ENCODE measurements at regions of chr2 and their contacts with region 1.

Region 1: GRCh38 chr2:130342533-130343275 is at the start of gene IMP4:
- DNase-seq: peak; percentile 98 to 99
- H3K4me3 ChIP-seq: peak within 1 kb of the TSS; percentile 70
- H3K4me3 Mint-ChIP-seq: peak within 1 kb of the TSS; percentile 84
- H3K27ac Mint-ChIP-seq: peak within 1 kb of the TSS; percentile 93
- H3K4me1 ChIP-seq: peaks cover 3% of the 10 kb centered on the region
- H3K4me1 Mint-ChIP-seq: peaks cover 13% of the 10 kb centered on the region
- H3K27me3 ChIP-seq: no peaks in the 10 kb centered on the region
- H3K27me3 Mint-ChIP-seq: no peaks in the 10 kb centered on the region
- CTCF ChIP-seq: peak; percentile 37 to 71
- total RNA-seq, gene IMP4: 105 and 120 TPM in 2 replicates

Region 2: DNA sequence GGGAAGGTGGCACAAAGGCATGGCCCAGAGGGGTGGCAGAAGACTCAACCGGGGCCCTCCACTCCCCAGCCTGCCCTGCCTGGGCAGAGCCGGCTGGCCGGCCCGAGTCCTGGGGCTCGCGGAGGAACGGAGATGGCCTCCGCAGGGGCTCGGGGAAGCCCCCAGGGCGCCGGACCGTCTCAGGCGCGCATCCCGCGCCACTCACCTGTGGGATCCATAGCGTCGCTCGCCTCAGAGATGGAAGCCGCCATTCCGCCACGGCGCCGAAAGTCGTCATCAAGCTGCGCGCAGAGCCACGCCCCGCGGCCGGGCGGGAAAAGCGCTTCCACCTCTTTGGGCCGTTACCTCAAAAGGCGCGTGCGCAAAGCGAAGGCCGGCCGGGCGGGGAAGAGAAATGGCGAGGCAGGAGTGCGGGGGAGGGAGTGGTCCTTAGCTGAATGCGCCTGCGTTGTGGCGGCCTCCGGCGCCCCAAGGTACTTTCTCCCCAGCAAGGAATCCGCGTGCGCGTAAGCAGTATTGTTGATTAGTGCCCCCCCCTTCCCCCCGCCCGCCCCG is 161.3 kb before region 1 on chr2 and contains the start of gene SMPD4:
- CTCF ChIA-PET with region 1: interaction called, 12 read pairs
- POLR2A ChIA-PET with region 1: interaction called, 16 read pairs
- intact Hi-C with region 1: no loop called
- DNase-seq: peak; percentile 98
- H3K4me3 ChIP-seq: peak within 1 kb of the TSS; percentile 100
- H3K4me3 Mint-ChIP-seq: peak within 1 kb of the TSS; percentile 96
- H3K27ac Mint-ChIP-seq: peak within 1 kb of the TSS; percentile 94
- H3K4me1 ChIP-seq: peaks cover 8% of the 10 kb centered on the region; the same call in 1 of the 2 replicates
- H3K4me1 Mint-ChIP-seq: peaks cover 8% of the 10 kb centered on the region
- H3K27me3 ChIP-seq: no peaks in the 10 kb centered on the region
- H3K27me3 Mint-ChIP-seq: no peaks in the 10 kb centered on the region
- CTCF ChIP-seq: no peak
- total RNA-seq, gene SMPD4: 140 and 141 TPM in 2 replicates

Region 3: DNA sequence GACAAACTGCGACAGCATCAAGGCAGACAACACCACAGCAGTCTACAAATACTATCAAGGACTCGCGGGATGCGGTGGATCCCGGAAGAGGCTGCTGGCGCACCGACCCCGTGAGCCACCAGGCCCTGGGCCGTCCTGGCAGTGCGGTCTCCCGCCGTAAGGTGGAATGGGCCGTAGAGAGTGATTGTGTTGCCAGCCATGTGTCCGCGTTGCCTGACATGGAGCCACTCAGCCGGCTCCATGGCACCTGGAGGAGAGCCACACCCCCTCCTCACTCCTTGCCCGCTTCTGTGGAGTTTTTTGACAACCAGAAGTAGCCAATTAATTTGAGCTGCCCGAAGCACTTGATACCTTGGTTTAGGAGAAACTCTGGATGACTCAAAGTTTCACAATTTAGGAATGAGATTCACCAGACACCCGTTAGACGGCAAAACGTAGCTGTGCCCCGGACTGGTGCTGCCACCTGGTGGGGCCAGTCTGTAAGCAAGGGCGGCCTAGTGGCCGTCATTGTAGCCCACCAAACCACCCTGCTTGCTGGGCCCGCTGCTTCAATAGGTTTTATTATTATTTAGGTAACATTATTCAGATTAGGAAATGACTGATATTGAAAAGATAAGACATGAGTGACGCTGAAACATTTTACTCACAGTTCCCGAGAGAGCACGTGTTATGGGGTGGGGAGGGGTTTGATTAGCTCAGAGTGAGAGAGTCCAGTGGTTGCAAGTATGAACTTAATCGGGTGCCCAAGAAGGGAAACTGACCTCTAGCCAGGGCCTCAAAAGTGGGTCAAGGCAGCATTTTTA is 10.2 kb before region 1 on chr2:
- CTCF ChIA-PET with region 1: interaction called, 18 read pairs
- POLR2A ChIA-PET with region 1: interaction called, 6 read pairs
- intact Hi-C with region 1: no loop called
- DNase-seq: peak; percentile 73 to 89
- H3K4me3 ChIP-seq: no peak overlapping the region
- H3K4me3 Mint-ChIP-seq: peak overlapping the region; percentile 39
- H3K27ac Mint-ChIP-seq: no peak overlapping the region
- H3K4me1 ChIP-seq: peaks cover 12% of the 10 kb centered on the region
- H3K4me1 Mint-ChIP-seq: no peaks in the 10 kb centered on the region
- H3K27me3 ChIP-seq: no peaks in the 10 kb centered on the region
- H3K27me3 Mint-ChIP-seq: peaks cover 6% of the 10 kb centered on the region
- CTCF ChIP-seq: peak; percentile 94 to 97

Region 4: GRCh38 chr2:130355578-130356431 is 13.1 kb after region 1 on chr2 and contains the start of gene PTPN18:
- CTCF ChIA-PET with region 1: interaction called, 17 read pairs
- POLR2A ChIA-PET with region 1: interaction called, 19 read pairs
- intact Hi-C with region 1: loop called (anchors 1 kb)
- DNase-seq: peak; percentile 90 to 94
- H3K4me3 ChIP-seq: peak within 1 kb of the TSS; percentile 75
- H3K4me3 Mint-ChIP-seq: peak within 1 kb of the TSS; percentile 90
- H3K27ac Mint-ChIP-seq: peak within 1 kb of the TSS; percentile 86
- H3K4me1 ChIP-seq: peaks cover 5% of the 10 kb centered on the region; the same call in 1 of the 2 replicates
- H3K4me1 Mint-ChIP-seq: peaks cover 10% of the 10 kb centered on the region
- H3K27me3 ChIP-seq: no peaks in the 10 kb centered on the region
- H3K27me3 Mint-ChIP-seq: no peaks in the 10 kb centered on the region
- CTCF ChIP-seq: peak; percentile 47 to 53
- total RNA-seq, gene PTPN18: 46.5 and 51.0 TPM in 2 replicates

Region 5: DNA sequence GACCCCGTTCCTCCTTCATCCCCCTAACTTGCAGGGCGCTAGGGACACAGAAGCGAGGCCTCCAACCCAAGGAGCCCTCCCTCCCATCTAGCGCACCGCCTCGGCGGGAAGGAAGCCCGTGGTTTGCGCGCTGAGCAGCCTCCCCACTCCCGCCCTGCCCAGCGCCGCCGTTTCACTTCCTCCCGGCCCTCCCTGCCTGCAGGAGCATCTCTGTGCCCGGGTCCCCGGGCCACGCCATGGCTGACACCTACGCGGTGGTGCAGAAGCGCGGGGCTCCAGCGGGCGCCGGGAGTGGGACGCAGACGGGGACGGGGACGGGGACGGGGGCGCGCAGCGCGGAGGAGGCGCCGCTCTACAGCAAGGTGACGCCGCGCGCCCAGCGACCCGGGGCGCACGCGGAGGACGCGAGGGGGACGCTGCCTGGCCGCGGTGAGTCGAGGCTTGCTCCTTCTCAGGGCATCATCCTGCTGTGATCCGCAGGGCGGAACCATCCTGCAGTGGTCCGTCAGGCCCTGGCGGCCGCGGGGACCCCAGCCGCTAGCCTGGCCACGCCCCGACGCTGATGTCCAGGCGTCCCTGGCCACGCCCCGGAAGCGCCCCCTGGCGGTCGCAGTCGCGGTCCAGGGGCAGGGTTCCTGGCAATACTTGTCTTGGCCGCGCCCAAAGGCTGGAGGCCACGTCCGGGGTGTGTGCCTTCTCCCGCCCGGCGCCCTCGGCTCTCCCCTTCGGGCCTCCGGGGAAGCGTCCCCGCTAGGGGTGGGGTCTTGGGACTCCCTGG is 29.5 kb after region 1 on chr2:
- CTCF ChIA-PET with region 1: interaction called, 11 read pairs
- POLR2A ChIA-PET with region 1: interaction called, 12 read pairs
- intact Hi-C with region 1: loop called (anchors 1 kb)
- DNase-seq: peak; percentile 93 to 98
- H3K4me3 ChIP-seq: peak overlapping the region; percentile 92
- H3K4me3 Mint-ChIP-seq: peak overlapping the region; percentile 98
- H3K27ac Mint-ChIP-seq: peak overlapping the region; percentile 91
- H3K4me1 ChIP-seq: peaks cover 6% of the 10 kb centered on the region
- H3K4me1 Mint-ChIP-seq: peaks cover 23% of the 10 kb centered on the region
- H3K27me3 ChIP-seq: no peaks in the 10 kb centered on the region
- H3K27me3 Mint-ChIP-seq: no peaks in the 10 kb centered on the region
- CTCF ChIP-seq: peak; percentile 93 to 95

Region 6: GRCh38 chr2:130391058-130391871 is 48.6 kb after region 1 on chr2:
- CTCF ChIA-PET with region 1: no interaction called
- POLR2A ChIA-PET with region 1: interaction called, 4 read pairs
- intact Hi-C with region 1: loop called (anchors 1 kb)
- DNase-seq: peak; percentile 84 to 88
- H3K4me3 ChIP-seq: peak overlapping the region; percentile 91
- H3K4me3 Mint-ChIP-seq: peak overlapping the region; percentile 72
- H3K27ac Mint-ChIP-seq: peak overlapping the region; percentile 74
- H3K4me1 ChIP-seq: peaks cover 21% of the 10 kb centered on the region
- H3K4me1 Mint-ChIP-seq: peaks cover 15% of the 10 kb centered on the region
- H3K27me3 ChIP-seq: no peaks in the 10 kb centered on the region
- H3K27me3 Mint-ChIP-seq: no peaks in the 10 kb centered on the region
- CTCF ChIP-seq: no peak

Measured in Caco-2 (cell line).